ENCODE measurements at regions of chr20 and their contacts with region 1.

Region 1: DNA sequence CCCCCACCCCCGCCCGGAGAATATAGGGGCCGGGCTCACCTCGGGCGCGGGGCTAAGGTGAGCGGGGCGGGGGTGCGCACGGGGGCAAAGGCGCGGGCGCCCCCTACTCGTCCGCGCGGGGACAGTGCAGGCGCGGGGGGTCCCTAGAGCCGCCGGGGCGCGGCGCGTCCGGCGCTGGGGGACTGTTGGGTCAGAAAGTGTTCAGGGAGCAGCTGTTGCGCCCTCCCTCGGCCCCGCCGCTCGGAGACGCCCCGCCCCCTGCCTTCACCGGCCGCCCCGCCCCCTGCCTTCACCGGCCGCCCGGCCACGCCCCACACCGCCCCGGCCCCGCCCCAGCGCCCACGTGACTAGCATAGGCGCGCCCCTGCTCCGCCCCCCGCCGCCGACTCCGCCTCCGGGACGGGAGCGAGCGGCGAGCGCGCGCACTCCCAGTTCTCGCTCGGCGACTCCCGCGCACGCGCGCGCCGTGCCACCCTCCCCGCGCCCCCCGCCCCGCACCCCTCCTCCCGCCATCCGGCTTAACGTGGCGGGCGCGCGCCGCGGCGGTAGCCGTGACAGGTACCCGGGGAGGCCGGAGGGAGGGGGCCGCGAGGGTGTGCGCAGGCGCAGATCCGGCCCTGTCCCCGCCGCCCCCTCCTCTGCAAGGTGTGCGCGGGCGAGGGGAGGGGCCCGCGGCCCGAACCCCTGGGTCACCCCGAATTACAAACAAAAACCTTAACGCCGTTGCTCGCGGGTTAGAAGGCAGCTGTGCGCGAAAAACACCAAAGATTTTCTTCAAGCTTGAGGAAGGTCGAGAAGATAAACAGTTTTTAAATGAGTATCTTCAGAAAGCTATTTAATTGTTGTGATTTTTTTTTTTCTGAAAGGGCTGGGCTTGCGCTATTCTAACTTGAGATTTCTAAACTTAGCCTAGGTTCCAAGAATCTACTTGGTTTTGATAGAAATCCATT is 704 bp upstream of the ZNF217 start:
- DNase-seq: peak; percentile 75
- H3K4me3 ChIP-seq: peak overlapping the region; percentile 79
- CTCF ChIP-seq: no peak

Region 2: GRCh38 chr20:53677447-53678314 is 83.3 kb after region 1 on chr20:
- in situ Hi-C with region 1: loop called (anchors 5 kb)
- DNase-seq: no peak
- H3K4me3 ChIP-seq: no peak overlapping the region
- CTCF ChIP-seq: no peak

Region 3: GRCh38 chr20:53786445-53787267 is 192.3 kb after region 1 on chr20:
- in situ Hi-C with region 1: no loop called
- DNase-seq: no peak
- H3K4me3 ChIP-seq: no peak overlapping the region
- CTCF ChIP-seq: no peak

Region 4: DNA sequence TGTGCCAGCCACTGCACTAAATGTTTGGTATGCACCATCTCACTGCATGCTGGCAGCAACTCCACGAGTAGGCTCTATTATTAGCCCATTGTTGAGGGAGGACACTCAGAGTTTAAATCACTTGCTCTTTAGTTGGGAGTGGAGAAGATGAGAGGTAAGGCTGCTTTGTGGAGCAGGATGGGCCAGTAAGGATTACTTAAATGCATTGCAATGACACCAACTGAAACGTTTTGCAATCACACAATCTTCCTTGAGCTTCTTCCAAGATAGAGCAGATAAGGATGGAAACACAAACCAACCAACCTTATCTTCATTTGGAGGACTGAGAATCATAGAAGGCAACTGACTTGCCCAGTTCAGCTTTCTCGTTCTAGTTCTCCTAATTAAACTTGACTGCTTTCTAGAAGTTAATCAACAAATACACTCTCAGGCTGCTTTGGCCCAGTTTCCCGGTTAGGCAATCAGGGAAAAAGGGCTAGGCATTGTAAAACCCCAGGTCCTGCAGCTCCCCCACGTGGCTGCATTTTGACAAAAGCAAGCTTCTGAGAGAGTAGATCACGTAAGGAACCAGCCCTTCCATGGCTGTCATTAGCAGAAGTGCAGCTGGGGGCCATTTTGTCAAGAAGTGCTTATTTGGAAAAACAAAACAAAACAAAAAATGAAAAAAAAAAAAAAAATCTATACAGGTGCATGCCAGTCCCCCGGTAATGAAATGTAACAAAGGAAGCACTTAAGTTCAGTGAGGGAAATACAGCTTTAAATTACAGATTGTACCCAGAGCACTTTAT is 345.4 kb after region 1 on chr20:
- in situ Hi-C with region 1: loop called (anchors 25 kb)
- DNase-seq: peak; percentile 90
- H3K4me3 ChIP-seq: peak overlapping the region; percentile 9
- CTCF ChIP-seq: peak; percentile 77

Measured in astrocyte of the cerebellum (primary cell).